PC-9 (cell line): ENCODE measurements at regions of chr11 and their contacts with region 1.

Region 1: DNA sequence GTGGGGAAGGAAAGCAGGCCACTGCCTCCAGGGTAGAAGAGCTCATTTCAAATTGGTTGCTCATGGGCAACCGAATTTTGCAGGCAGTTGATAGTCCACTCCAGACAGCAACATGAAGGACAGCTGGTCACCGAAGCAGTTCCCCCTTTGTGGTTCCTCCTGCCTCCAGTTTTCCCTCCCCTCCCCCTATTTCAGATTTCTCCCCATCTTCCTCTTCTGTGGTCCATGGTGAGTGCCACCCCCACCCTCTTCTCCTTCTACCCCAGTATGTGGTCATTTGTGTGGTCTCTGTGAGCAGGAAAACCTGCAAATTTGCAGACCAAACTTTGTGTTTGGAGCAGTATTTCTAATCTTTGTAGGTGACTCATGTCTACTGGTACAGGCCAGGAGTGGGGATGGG is 38.2 kb upstream of the PAK1 start:
- DNase-seq: no peak
- H3K4me3 ChIP-seq: no peak overlapping the region
- H3K27ac ChIP-seq: no peak overlapping the region
- H3K4me1 ChIP-seq: peaks cover 41% of the 10 kb centered on the region
- H3K27me3 ChIP-seq: peaks cover 18% of the 10 kb centered on the region; the same call in 1 of the 2 replicates
- CTCF ChIP-seq: no peak

Region 2: GRCh38 chr11:77479746-77480352 is 32.2 kb before region 1 on chr11:
- CTCF ChIA-PET with region 1: no interaction called
- POLR2A ChIA-PET with region 1: interaction called, 15 read pairs
- intact Hi-C with region 1: no loop called
- DNase-seq: no peak
- H3K4me3 ChIP-seq: no peak overlapping the region
- H3K27ac ChIP-seq: no peak overlapping the region
- H3K4me1 ChIP-seq: no peaks in the 10 kb centered on the region
- H3K27me3 ChIP-seq: no peaks in the 10 kb centered on the region
- CTCF ChIP-seq: no peak